Activated CD4-positive, alpha-beta T cell treated with anti-CD3 and anti-CD28 coated beads for 36 hours (primary cell): ENCODE measurements at regions of chr22 and their contacts with region 1.

Region 1: DNA sequence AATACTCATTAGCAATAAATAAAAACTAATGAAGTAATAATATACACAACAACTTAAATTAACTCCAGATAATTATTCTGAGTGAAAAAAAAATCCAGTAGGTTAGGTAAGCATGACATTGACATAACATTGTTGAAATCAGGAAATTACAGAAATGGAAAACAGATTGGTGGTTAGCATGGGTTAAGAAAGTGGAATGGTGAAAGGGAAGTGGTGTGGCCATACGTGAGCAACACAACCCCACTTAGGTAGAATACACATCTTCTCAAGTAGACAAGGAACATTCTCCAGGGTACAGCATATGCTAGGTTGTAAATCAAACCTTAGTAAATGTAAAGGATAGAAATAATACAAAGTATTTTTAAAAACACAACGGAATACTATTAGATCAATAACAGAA is 30.2 kb upstream of the CLTCL1 start:
- DNase-seq: no peak
- ATAC-seq: no peak
- H3K4me3 Mint-ChIP-seq: no peak overlapping the region
- H3K27ac Mint-ChIP-seq: no peak overlapping the region
- H3K4me1 Mint-ChIP-seq: no peaks in the 10 kb centered on the region
- H3K27me3 Mint-ChIP-seq: no peaks in the 10 kb centered on the region

Region 2: GRCh38 chr22:19260804-19261203 is 61.0 kb before region 1 on chr22:
- CTCF ChIA-PET with region 1: no interaction called
- POLR2A ChIA-PET with region 1: no interaction called
- intact Hi-C with region 1: loop called in 1 of 2 experiments (anchors 5 kb)
- DNase-seq: no peak
- ATAC-seq: no peak
- H3K4me3 Mint-ChIP-seq: no peak overlapping the region
- H3K27ac Mint-ChIP-seq: no peak overlapping the region
- H3K4me1 Mint-ChIP-seq: peaks cover 20% of the 10 kb centered on the region
- H3K27me3 Mint-ChIP-seq: no peaks in the 10 kb centered on the region

Region 3: GRCh38 chr22:19336133-19337075 is 14.6 kb after region 1 on chr22:
- CTCF ChIA-PET with region 1: interaction called, 4 read pairs
- POLR2A ChIA-PET with region 1: interaction called, 8 read pairs
- intact Hi-C with region 1: loop called in 1 of 2 experiments (anchors 2 kb)
- DNase-seq: no peak
- ATAC-seq: no peak
- H3K4me3 Mint-ChIP-seq: no peak overlapping the region
- H3K27ac Mint-ChIP-seq: no peak overlapping the region
- H3K4me1 Mint-ChIP-seq: no peaks in the 10 kb centered on the region
- H3K27me3 Mint-ChIP-seq: no peaks in the 10 kb centered on the region

Region 4: DNA sequence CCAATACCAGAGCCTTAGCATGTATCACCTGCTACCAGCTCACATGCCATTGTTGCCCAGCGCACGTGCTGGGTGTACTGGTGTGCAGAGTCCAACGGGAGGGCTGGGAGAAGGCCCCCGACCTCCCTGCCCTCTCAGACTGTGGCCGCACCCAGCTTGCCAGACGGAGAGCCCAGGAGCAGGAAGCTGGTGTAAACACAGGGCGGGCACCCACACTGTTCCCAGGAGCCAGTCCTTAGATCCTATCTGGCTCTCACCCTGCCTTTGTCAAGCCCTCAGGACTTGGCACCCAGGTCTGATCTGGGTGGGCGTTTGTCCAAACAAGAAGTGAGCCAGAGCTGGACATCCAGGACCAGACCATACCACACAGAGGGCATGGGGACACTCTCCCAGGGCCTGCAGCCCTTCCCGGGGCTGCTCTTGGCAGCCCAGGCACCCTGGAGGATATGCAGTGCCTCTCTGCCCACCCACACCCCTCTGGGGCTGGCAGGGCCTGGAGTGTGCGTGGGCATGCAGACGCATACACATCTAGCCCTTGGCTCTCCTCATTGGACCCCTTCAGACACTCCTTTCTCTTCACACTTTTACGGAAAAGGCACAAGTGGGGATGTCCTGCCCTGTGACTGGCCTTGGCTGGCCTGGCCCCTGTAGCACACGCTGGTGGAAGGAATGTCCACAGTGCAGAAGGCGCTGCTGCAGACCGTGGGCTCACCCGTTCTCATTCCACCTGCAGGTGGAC is 222.4 kb after region 1 on chr22:
- CTCF ChIA-PET with region 1: no interaction called
- POLR2A ChIA-PET with region 1: no interaction called
- intact Hi-C with region 1: no loop called
- DNase-seq: no peak
- ATAC-seq: no peak
- H3K4me3 Mint-ChIP-seq: no peak overlapping the region
- H3K27ac Mint-ChIP-seq: no peak overlapping the region
- H3K4me1 Mint-ChIP-seq: no peaks in the 10 kb centered on the region
- H3K27me3 Mint-ChIP-seq: peaks cover 2% of the 10 kb centered on the region

Region 5: GRCh38 chr22:19607192-19608002 is 285.6 kb after region 1 on chr22:
- CTCF ChIA-PET with region 1: no interaction called
- POLR2A ChIA-PET with region 1: no interaction called
- intact Hi-C with region 1: no loop called
- DNase-seq: peak; percentile 85
- ATAC-seq: peak; percentile 80
- H3K4me3 Mint-ChIP-seq: peak overlapping the region; percentile 50
- H3K27ac Mint-ChIP-seq: peak overlapping the region; percentile 82
- H3K4me1 Mint-ChIP-seq: peaks cover 64% of the 10 kb centered on the region
- H3K27me3 Mint-ChIP-seq: no peaks in the 10 kb centered on the region